SK-N-SH (cell line): ENCODE measurements at regions of chr15 and their contacts with region 1.

Region 1: DNA sequence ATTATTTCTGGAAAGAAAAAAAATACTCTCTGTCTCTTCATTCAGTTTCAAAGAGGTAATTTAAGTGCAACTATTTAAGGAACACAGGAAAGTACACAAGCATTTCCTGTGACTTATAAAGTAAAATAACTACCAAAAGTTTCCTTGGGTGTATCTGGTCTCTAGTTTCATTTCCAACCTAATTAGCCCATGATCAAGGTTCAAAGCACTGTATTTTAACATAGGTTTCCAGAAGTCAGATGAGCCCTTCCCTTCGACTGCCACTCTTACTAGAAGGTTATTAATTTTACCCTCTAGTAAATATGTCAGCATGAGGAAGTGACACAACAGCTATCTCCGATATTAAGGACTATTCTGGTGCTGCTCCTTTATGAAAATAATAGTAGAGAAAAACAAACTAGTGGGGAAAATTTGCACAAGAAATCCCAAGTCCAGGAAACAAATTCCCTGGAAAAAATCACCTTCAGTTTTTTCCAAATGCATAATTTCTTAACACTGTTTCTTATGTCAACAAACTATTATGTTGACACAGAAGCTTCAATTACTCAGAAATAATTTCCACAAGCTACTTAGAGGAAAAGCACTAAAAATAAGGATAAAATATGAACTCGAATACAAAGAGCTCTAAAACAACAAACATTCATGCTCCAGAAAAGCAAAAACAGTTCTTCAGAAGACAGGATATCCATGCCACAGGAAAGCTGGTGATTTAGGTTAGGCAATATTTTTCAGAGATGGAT is 35.3 kb downstream of the CCPG1 start:
- DNase-seq: no peak
- H3K4me3 ChIP-seq: no peak overlapping the region
- H3K27ac ChIP-seq: no peak overlapping the region
- H3K4me1 ChIP-seq: no peaks in the 10 kb centered on the region; a peak in 1 of 4 replicates
- H3K27me3 ChIP-seq: no peaks in the 10 kb centered on the region
- CTCF ChIP-seq: no peak
- EP300 ChIP-seq: no peak
- RAD21 ChIP-seq: no peak

Region 2: GRCh38 chr15:55357774-55358173 is 15.1 kb before region 1 on chr15:
- CTCF ChIA-PET with region 1: interaction called, 12 read pairs
- POLR2A ChIA-PET with region 1: no interaction called
- DNase-seq: peak; percentile 22
- H3K4me3 ChIP-seq: no peak overlapping the region
- H3K27ac ChIP-seq: peak overlapping the region in 1 of 2 experiments; percentile 17; a peak in 1 of 4 replicates
- H3K4me1 ChIP-seq: no peaks in the 10 kb centered on the region; a peak in 1 of 4 replicates
- H3K27me3 ChIP-seq: no peaks in the 10 kb centered on the region
- CTCF ChIP-seq: no peak
- EP300 ChIP-seq: peak in 1 of 2 experiments; percentile 21; a peak in 1 of 4 replicates
- RAD21 ChIP-seq: no peak

Region 3: DNA sequence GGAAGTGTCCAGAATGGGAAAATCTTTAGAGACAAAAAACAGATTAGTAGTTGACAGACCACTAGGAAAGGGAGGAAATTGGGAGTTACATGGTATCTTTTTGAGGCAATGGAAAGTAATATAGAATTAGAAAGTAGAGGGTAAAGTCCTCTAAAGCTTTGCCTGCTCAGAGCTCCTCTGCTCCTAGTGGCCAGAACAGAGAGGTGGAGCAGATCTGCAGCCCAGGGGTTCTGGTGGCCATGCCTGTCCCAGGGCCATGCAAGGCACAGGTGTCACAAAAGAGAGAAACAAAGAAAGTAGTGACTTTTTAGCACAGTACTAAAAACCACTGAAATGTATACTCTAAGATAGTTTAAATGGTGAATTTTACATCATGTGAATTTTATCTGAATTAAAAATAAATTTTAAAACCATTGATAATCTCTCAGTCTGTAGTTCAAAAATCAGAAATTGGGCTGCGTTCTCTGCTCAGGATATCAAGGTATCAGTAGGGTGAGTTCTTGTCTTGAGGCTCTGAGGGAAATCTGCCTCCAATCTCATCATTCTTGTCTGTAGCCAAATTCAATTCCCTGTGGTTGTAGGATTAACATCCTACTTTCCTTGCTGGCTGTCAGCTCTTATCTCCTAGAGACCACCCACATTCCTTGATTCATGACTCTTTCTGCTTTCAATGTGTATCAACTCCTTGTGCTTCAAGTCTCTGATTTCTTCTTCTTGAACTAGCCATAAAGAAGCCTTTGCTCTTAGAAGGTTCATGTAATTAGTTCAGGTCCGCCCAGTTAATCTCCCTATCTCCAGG is 191.7 kb after region 1 on chr15:
- CTCF ChIA-PET with region 1: no interaction called
- POLR2A ChIA-PET with region 1: no interaction called
- DNase-seq: no peak
- H3K4me3 ChIP-seq: no peak overlapping the region
- H3K27ac ChIP-seq: no peak overlapping the region
- H3K4me1 ChIP-seq: no peaks in the 10 kb centered on the region
- H3K27me3 ChIP-seq: no peaks in the 10 kb centered on the region
- CTCF ChIP-seq: peak; percentile 18; the same call in 1 of the 2 replicates
- EP300 ChIP-seq: no peak
- RAD21 ChIP-seq: no peak

Region 4: DNA sequence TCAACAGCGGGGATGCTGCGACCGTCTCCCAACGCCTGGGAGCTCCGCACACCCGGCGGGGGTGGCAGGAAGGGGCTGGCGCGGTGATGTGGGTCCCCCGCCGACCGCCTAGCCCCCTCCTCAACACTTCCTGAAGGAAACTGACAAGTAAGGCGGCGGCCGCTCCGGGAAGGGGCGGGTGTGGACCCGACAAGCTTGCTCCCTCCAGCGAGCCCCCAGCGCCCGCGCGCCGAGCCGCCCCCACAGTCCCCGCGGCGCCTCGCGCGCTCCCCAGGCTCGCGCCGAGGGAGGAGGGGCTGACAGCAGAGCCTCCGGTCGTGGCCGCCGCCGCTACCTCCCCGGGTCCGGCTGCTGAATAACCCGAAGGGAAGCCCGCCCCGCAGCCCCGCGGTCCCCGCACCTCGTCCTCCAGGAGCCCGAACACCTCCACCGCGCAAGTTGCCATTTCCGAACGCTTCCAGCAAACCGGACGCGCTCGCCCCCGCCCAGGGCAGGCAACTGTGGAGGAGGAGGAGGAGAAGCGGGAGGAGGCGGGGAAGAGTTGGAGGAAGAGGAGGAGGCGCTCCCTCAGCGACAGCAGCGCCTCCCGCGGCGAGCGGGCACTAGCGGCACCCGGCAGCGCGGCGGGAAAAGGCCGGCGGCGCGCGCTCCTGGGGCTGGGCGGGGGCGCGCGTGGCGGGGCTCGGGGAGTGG is 620.4 kb after region 1 on chr15 and contains the start of gene NEDD4:
- CTCF ChIA-PET with region 1: no interaction called
- POLR2A ChIA-PET with region 1: no interaction called
- DNase-seq: peak; percentile 92
- H3K4me3 ChIP-seq: peak within 1 kb of the TSS; percentile 81 to 88
- H3K27ac ChIP-seq: peak within 1 kb of the TSS; percentile 79 to 86
- H3K4me1 ChIP-seq: peaks cover 14 to 24% of the 10 kb centered on the region in 2 experiments; a peak in 3 of 4 replicates
- H3K27me3 ChIP-seq: no peaks in the 10 kb centered on the region
- CTCF ChIP-seq: peak; percentile 53
- EP300 ChIP-seq: no peak
- RAD21 ChIP-seq: no peak
- polyA plus RNA-seq, gene NEDD4: 12.9 and 17.3 TPM in 2 replicates